Natural killer cell (primary cell): ENCODE measurements at regions of chr4 and their contacts with region 1.

Region 1: DNA sequence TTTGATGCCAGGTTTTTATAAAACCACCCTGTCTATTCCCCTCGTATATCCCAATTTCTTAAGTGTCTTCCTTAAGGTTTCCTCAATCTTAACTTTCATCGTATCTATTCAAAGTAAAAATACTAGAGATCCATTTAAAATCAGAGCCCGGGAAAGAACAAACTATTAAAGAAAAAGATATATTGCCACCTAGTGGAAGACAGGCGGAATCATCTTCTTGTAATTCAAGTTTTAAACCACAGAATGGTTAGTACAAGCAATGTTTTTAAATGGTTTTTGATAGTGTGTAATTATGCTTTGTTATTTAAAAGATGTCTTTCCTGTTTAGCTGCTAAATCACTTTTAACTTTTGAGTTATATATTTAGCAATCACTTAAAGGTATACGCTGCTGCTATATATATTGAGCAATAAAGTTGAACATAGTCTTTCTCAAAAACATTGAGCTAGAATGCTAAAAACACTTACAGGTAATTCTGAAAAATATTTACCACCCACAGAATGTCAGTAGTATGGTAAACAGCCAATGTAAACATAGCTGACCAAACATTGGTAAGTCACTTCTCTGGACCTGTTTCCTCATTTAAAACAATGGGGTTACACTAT is 18.2 kb downstream of the PRDM8 start:
- DNase-seq: peak in 1 of 2 donors; percentile 56
- ATAC-seq: peak in 2 of 3 donors; percentile 34 to 51
- H3K4me3 ChIP-seq: no peak overlapping the region
- H3K4me3 Mint-ChIP-seq: no peak overlapping the region
- H3K27ac ChIP-seq: no peak overlapping the region
- H3K27ac Mint-ChIP-seq: no peak overlapping the region
- H3K4me1 ChIP-seq: no peaks in the 10 kb centered on the region
- H3K4me1 Mint-ChIP-seq: no peaks in the 10 kb centered on the region
- H3K27me3 ChIP-seq: peaks cover 6% of the 10 kb centered on the region
- H3K27me3 Mint-ChIP-seq: peaks cover 8 to 32% of the 10 kb centered on the region in 2 donors
- CTCF ChIP-seq: peak; percentile 88

Region 2: DNA sequence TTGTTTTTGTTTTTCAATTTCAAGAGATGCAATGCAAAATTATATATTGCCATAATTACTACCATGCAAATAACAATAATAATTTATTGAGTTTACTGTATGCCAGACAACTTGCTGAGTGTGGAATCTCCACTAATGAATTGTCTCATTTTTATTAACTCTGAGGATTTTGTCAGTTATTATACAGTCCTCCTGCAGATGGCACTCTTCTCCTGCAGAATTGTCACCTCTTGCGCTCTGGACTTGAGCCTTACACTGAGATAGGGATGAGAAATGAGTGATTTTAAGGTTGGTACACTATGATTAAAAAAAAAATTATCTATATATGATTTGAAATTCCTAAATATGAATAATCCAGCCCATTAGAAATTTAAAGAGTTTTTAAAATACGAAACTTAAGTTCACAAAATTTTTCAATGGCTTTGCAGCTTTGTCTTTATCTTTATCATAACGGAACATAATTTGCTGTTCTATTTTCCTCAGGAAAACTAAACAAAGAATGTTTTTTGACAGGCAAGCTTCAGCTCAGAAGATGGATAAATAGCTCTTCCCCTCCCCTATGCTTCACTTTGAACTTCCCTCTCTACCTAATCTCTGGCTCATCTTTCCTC is 1263.6 kb before region 1 on chr4:
- intact Hi-C with region 1: loop called (anchors 1 kb)
- DNase-seq: peak in 1 of 2 donors; percentile 69
- ATAC-seq: peak; percentile 64 to 76 (median 74)
- H3K4me3 ChIP-seq: no peak overlapping the region
- H3K4me3 Mint-ChIP-seq: no peak overlapping the region
- H3K27ac ChIP-seq: no peak overlapping the region
- H3K27ac Mint-ChIP-seq: no peak overlapping the region
- H3K4me1 ChIP-seq: no peaks in the 10 kb centered on the region
- H3K4me1 Mint-ChIP-seq: no peaks in the 10 kb centered on the region
- H3K27me3 ChIP-seq: peaks cover 2% of the 10 kb centered on the region
- H3K27me3 Mint-ChIP-seq: peaks cover 27 to 28% of the 10 kb centered on the region in 2 donors
- CTCF ChIP-seq: peak; percentile 70

Region 3: DNA sequence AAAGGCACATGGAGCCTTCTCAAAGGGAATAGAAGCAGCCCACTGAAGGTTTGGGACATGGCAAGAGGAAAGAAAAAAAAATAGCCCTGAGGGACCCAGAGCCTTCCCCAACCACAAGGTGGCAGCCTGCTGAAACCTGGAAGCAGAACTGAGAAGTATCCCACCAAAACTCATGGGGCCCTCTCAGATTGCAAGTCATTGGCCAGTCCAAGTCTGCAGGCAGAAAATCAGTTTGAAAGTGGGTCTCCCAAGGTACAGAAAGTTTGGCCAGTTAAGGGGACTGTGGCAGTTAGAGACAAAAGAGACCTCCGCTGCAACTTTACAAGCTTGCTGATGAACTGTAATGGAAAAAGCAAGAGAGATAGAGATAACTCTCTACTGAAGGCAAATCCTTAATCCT is 298.3 kb before region 1 on chr4:
- intact Hi-C with region 1: loop called (anchors 10 kb)
- DNase-seq: peak in 1 of 2 donors; percentile 63
- ATAC-seq: peak in 1 of 3 donors; percentile 51
- H3K4me3 ChIP-seq: no peak overlapping the region
- H3K4me3 Mint-ChIP-seq: no peak overlapping the region
- H3K27ac ChIP-seq: no peak overlapping the region
- H3K27ac Mint-ChIP-seq: no peak overlapping the region
- H3K4me1 ChIP-seq: no peaks in the 10 kb centered on the region
- H3K4me1 Mint-ChIP-seq: peaks cover 12 to 13% of the 10 kb centered on the region in 2 donors
- H3K27me3 ChIP-seq: no peaks in the 10 kb centered on the region
- H3K27me3 Mint-ChIP-seq: no peaks in the 10 kb centered on the region
- CTCF ChIP-seq: peak; percentile 32

Region 4: DNA sequence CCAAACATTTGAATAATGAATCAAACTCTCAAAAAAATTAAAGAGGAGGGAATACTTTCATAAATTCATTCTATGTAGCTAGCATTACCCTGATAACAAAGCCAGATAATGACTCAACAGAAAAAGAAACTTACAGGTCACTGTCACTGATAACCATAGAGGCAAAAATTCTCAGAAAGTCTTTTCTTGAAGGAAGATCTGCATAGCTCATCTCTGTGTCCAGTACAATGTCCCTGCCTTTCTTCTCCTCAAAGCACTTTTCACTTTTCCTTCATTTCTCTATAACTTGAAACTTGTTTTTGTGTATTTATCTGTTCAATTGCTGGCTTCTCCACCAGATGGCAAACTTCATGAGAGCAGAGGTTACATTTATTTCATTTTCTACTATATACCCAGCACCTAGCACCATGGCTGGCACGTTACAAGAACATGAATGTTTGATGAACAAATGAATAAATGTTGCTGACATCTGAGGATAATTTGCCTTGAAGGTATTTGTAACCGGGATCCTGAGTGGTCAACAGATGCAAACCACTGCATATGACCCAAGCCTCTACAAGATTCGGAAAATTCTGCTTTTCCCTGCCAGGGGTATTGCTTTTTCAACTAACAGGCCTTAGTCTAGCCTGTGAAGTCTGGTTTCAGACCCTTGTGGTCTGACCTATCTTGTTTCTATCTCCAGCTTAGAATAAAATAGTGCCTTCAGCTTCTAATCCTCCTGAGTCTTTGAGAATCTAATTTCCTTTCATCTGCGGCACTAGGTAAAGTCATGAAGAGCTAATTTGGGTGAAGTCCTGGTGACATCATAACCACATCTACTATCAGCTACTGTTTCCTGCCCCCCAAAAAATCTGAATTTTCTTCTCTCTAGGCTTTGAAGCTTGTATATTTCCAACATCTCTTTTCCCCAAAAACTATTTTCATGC is 90.0 kb before region 1 on chr4:
- intact Hi-C with region 1: loop called (anchors 10 kb)
- DNase-seq: peak in 1 of 2 donors; percentile 80
- ATAC-seq: peak; percentile 67 to 74 (median 68)
- H3K4me3 ChIP-seq: no peak overlapping the region
- H3K4me3 Mint-ChIP-seq: no peak overlapping the region
- H3K27ac ChIP-seq: peak overlapping the region; percentile 69
- H3K27ac Mint-ChIP-seq: peak overlapping the region; percentile 17 to 20
- H3K4me1 ChIP-seq: peaks cover 12% of the 10 kb centered on the region
- H3K4me1 Mint-ChIP-seq: peaks cover 22 to 23% of the 10 kb centered on the region in 2 donors
- H3K27me3 ChIP-seq: no peaks in the 10 kb centered on the region
- H3K27me3 Mint-ChIP-seq: no peaks in the 10 kb centered on the region
- CTCF ChIP-seq: peak; percentile 37

Region 5: GRCh38 chr4:80138551-80139538 is 76.7 kb before region 1 on chr4:
- intact Hi-C with region 1: no loop called
- DNase-seq: peak in 1 of 2 donors; percentile 75
- ATAC-seq: peak; percentile 54 to 75 (median 74)
- H3K4me3 ChIP-seq: no peak overlapping the region
- H3K4me3 Mint-ChIP-seq: no peak overlapping the region
- H3K27ac ChIP-seq: peak overlapping the region; percentile 20
- H3K27ac Mint-ChIP-seq: peak overlapping the region in 1 of 2 donors; percentile 25
- H3K4me1 ChIP-seq: peaks cover 6% of the 10 kb centered on the region
- H3K4me1 Mint-ChIP-seq: peaks cover 0 to 13% of the 10 kb centered on the region in 2 donors
- H3K27me3 ChIP-seq: no peaks in the 10 kb centered on the region
- H3K27me3 Mint-ChIP-seq: no peaks in the 10 kb centered on the region
- CTCF ChIP-seq: no peak

Region 6: DNA sequence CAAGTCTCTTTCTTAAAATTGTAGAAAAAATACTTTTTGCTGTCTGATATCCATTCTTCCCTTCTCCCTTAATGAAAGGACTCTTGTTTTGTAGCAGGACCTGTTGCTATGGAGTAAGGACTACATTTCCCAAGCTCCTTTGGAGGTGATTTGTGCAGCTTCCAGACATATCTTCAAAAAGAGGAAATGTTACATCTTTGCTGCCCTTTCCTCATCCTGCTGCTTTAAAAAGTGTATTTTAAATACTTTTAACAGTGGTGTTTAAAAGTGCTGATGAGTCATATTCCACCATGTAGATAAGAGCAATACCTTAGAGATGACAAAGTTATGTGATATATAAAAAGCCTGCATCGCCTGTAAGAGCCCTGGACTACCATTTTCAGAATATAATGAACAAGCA is 218.7 kb after region 1 on chr4:
- intact Hi-C with region 1: no loop called
- DNase-seq: no peak
- ATAC-seq: no peak
- H3K4me3 ChIP-seq: no peak overlapping the region
- H3K4me3 Mint-ChIP-seq: no peak overlapping the region
- H3K27ac ChIP-seq: no peak overlapping the region
- H3K27ac Mint-ChIP-seq: no peak overlapping the region
- H3K4me1 ChIP-seq: peaks cover 6% of the 10 kb centered on the region
- H3K4me1 Mint-ChIP-seq: peaks cover 21 to 28% of the 10 kb centered on the region in 2 donors
- H3K27me3 ChIP-seq: no peaks in the 10 kb centered on the region
- H3K27me3 Mint-ChIP-seq: no peaks in the 10 kb centered on the region
- CTCF ChIP-seq: no peak